ENCODE measurements at regions of chr7 and their contacts with region 1.

Region 1: DNA sequence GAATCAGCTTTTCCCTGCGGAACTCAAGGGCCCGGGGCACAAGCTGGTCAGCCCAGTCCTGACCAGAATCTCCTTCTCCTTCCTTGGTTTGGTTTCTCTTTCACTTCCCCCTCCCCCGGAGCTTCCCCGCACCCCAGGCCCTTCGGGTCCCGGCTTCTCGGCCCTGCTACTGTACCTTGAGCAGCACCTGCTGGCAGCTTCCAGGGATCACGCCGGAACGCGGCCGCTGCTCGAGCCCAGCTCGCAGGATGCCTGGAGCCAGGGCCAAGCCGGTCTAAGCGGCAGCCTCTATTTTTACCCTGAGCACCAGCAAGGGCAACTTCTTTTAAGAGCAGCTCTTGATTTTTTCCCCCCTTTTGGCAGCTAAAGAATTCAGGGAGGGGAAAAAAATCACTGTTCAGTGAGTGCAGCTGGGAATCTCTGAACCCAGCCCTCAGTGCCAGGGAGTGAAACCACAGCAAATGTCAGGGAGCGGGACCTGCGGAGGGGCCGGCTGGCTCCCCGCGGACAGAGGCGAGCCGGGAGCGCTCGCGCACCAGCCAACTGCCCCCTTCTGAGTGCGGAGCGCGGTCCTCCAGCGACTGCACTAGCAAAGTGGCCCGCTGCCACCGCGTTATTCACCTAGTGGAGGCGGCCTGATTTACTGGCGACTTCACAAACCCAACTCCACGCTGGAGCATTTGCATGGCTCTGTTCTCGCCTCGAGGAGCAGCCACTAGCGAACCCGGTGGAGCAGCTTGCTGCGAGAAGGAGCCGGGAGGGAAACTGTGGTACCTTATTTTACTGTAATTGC is 2.4 kb upstream of the INHBA start:
- DNase-seq: peak; percentile 50
- ATAC-seq: peak; percentile 98
- H3K4me3 ChIP-seq: peak overlapping the region; percentile 54; the same call in 1 of the 2 replicates
- H3K27ac ChIP-seq: no peak overlapping the region
- H3K4me1 ChIP-seq: peaks cover 11% of the 10 kb centered on the region
- H3K27me3 ChIP-seq: no peaks in the 10 kb centered on the region
- CTCF ChIP-seq: peak; percentile 68 to 88 (median 82)
- EP300 ChIP-seq: peak in 1 of 2 experiments; percentile 11; a peak in 1 of 4 replicates
- POLR2A ChIP-seq: no peak
- RAD21 ChIP-seq: peak; percentile 95

Region 2: GRCh38 chr7:39880556-39880955 is 1824.7 kb before region 1 on chr7:
- CTCF ChIA-PET with region 1: no interaction called
- POLR2A ChIA-PET with region 1: no interaction called
- RAD21 ChIA-PET with region 1: no interaction called
- SMC1A ChIA-PET with region 1: no interaction called
- in situ Hi-C with region 1: loop called (anchors 25 kb)
- intact Hi-C with region 1: no loop called
- DNase-seq: no peak
- ATAC-seq: no peak
- H3K4me3 ChIP-seq: no peak overlapping the region
- H3K27ac ChIP-seq: no peak overlapping the region
- H3K4me1 ChIP-seq: no peaks in the 10 kb centered on the region
- H3K27me3 ChIP-seq: no peaks in the 10 kb centered on the region
- CTCF ChIP-seq: no peak
- EP300 ChIP-seq: no peak
- POLR2A ChIP-seq: no peak
- RAD21 ChIP-seq: no peak

Region 3: DNA sequence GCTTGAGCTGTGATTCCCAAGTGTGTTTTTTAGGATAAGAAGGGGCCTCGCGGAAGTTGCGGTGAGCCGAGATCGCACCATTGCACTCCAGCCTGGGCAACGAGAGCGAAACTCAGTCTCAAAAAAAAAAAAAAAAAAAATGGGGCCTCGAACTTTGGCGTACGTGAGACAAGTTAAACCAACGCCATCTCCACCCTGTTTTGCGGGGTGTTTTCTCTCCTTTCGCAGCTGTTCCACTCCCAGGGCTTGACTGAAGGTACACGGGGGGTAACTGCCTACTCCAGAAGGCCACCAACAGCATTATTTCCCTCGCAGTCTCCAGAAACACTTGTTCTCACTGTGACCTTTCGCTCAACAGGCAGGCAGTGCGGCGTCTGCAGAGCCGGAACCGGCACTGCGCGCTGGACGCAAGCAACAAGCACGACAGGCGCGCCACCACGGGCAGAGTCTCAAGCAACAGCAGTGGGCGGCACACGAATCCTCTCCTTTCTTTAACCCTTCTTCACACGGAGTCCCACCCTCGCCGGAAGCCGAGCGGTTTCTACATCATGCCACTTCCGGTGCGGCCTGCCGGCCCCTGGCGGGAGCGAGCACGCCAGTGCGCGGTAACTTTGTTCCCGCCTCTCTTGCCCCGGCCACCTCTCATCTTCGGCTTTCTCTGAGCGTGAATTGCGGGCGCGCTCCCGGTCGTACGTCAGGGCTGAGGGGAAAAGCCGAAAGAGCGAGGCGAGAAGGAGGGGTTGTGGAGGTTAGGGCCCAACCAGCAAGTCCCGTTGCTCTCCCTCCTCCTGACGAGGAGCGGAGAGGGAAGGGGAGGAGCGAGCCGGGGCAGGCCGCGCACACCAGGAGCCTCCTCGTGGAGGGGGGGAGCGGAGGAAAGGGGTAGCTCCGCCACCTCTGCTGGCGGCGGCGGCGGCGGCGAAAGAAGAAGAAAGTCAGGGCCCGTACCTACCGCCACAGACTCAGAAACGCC is 1756.1 kb before region 1 on chr7:
- CTCF ChIA-PET with region 1: interaction called, 3 read pairs
- POLR2A ChIA-PET with region 1: no interaction called
- RAD21 ChIA-PET with region 1: no interaction called
- SMC1A ChIA-PET with region 1: no interaction called
- in situ Hi-C with region 1: no loop called
- intact Hi-C with region 1: loop called (anchors 5 kb)
- DNase-seq: peak; percentile 98
- ATAC-seq: peak; percentile 80
- H3K4me3 ChIP-seq: peak overlapping the region; percentile 93
- H3K27ac ChIP-seq: peak overlapping the region; percentile 98
- H3K4me1 ChIP-seq: peaks cover 9% of the 10 kb centered on the region; the same call in 1 of the 2 replicates
- H3K27me3 ChIP-seq: no peaks in the 10 kb centered on the region
- CTCF ChIP-seq: no peak
- EP300 ChIP-seq: peak in 1 of 2 experiments; percentile 7; a peak in 1 of 4 replicates
- POLR2A ChIP-seq: peak; percentile 98
- RAD21 ChIP-seq: no peak

Region 4: DNA sequence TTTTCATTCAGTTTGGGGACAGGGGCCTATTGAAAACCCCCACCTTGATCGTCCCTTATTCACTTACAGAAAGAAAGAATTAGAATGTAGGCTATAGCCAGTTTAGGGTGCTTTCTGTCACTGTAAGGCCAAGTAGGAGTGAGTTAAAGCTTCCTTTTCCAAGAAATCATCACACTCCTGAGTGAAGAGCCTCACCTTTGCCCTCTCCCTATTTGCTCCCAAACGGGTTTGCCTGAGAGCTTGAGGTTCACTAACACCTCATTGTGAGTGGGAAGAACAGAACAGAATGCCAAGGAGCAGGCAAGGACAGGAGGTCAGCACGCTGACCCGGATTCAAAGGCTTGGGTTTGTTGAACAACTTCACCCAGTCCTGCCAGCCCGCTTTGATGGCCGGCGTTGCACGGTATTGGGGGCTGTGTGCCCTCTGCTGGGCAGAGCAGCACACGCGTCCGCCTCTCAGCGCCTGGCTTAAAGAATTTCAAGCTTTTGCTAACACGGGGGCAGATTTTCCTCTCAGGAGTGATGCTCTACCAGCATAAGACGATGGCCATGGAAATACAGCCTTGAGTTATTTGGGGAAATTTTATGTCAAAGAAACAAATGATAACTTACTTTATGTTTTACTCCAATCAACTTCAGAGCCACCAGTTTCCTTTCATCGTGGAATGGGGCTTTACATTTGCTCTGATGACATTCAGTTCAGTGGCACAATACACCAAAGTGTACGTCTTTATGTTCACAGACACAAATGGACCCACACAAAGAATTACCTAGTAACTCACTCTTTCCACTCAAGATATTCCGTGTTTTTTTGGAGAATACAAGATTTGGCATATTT is 1100.5 kb before region 1 on chr7:
- CTCF ChIA-PET with region 1: interaction called, 7 read pairs
- POLR2A ChIA-PET with region 1: no interaction called
- RAD21 ChIA-PET with region 1: interaction called, 4 read pairs
- SMC1A ChIA-PET with region 1: no interaction called
- in situ Hi-C with region 1: no loop called
- intact Hi-C with region 1: loop called (anchors 1 kb)
- DNase-seq: no peak
- ATAC-seq: peak; percentile 99
- H3K4me3 ChIP-seq: no peak overlapping the region
- H3K27ac ChIP-seq: no peak overlapping the region
- H3K4me1 ChIP-seq: no peaks in the 10 kb centered on the region
- H3K27me3 ChIP-seq: no peaks in the 10 kb centered on the region
- CTCF ChIP-seq: peak; percentile 62 to 77 (median 74)
- EP300 ChIP-seq: no peak
- POLR2A ChIP-seq: no peak
- RAD21 ChIP-seq: peak; percentile 63

Region 5: GRCh38 chr7:41003031-41003925 is 702.0 kb before region 1 on chr7:
- CTCF ChIA-PET with region 1: interaction called, 36 read pairs
- POLR2A ChIA-PET with region 1: interaction called, 3 read pairs
- RAD21 ChIA-PET with region 1: interaction called, 21 read pairs
- SMC1A ChIA-PET with region 1: interaction called, 23 read pairs
- in situ Hi-C with region 1: no loop called
- intact Hi-C with region 1: no loop called
- DNase-seq: peak; percentile 3
- ATAC-seq: peak; percentile 67
- H3K4me3 ChIP-seq: no peak overlapping the region
- H3K27ac ChIP-seq: no peak overlapping the region
- H3K4me1 ChIP-seq: no peaks in the 10 kb centered on the region
- H3K27me3 ChIP-seq: no peaks in the 10 kb centered on the region; a peak in 1 of 4 replicates
- CTCF ChIP-seq: peak; percentile 69 to 76 (median 71); a peak in 5 of 6 replicates
- EP300 ChIP-seq: no peak
- POLR2A ChIP-seq: no peak
- RAD21 ChIP-seq: peak; percentile 79

Region 6: GRCh38 chr7:41491883-41492471 is 213.3 kb before region 1 on chr7:
- CTCF ChIA-PET with region 1: no interaction called
- POLR2A ChIA-PET with region 1: no interaction called
- RAD21 ChIA-PET with region 1: no interaction called
- SMC1A ChIA-PET with region 1: no interaction called
- in situ Hi-C with region 1: no loop called
- intact Hi-C with region 1: no loop called
- DNase-seq: no peak
- ATAC-seq: no peak
- H3K4me3 ChIP-seq: no peak overlapping the region
- H3K27ac ChIP-seq: no peak overlapping the region
- H3K4me1 ChIP-seq: no peaks in the 10 kb centered on the region
- H3K27me3 ChIP-seq: no peaks in the 10 kb centered on the region
- CTCF ChIP-seq: no peak
- EP300 ChIP-seq: no peak
- POLR2A ChIP-seq: no peak
- RAD21 ChIP-seq: no peak

Region 7: GRCh38 chr7:41573018-41573417 is 132.3 kb before region 1 on chr7:
- CTCF ChIA-PET with region 1: no interaction called
- POLR2A ChIA-PET with region 1: no interaction called
- RAD21 ChIA-PET with region 1: no interaction called
- SMC1A ChIA-PET with region 1: no interaction called
- in situ Hi-C with region 1: no loop called
- intact Hi-C with region 1: no loop called
- DNase-seq: no peak
- ATAC-seq: no peak
- H3K4me3 ChIP-seq: no peak overlapping the region
- H3K27ac ChIP-seq: no peak overlapping the region
- H3K4me1 ChIP-seq: no peaks in the 10 kb centered on the region
- H3K27me3 ChIP-seq: no peaks in the 10 kb centered on the region
- CTCF ChIP-seq: no peak
- EP300 ChIP-seq: no peak
- POLR2A ChIP-seq: no peak
- RAD21 ChIP-seq: no peak

Region 8: DNA sequence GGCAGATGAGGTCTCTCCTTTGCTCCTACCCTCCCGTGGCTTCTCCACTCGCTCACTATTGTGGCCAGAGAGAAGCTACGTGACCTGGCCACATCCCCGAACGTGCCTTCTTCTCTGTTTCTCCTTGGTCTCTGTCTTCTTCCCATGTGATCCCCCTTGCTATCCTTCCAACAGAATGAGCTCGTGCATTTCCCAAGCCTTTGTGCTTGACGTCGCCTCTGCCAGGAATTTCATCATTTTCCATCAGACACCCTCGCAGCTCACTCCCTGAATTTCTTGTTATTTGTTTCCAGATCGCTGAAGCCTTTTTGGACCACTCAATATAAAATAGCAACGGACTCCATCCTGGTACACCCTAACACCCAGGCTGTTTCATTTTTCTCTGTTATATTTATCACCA is 11.4 kb after region 1 on chr7:
- CTCF ChIA-PET with region 1: interaction called, 17 read pairs
- POLR2A ChIA-PET with region 1: interaction called, 3 read pairs
- RAD21 ChIA-PET with region 1: interaction called, 8 read pairs
- SMC1A ChIA-PET with region 1: interaction called, 13 read pairs
- in situ Hi-C with region 1: no loop called
- intact Hi-C with region 1: no loop called
- DNase-seq: no peak
- ATAC-seq: no peak
- H3K4me3 ChIP-seq: no peak overlapping the region
- H3K27ac ChIP-seq: no peak overlapping the region
- H3K4me1 ChIP-seq: no peaks in the 10 kb centered on the region
- H3K27me3 ChIP-seq: no peaks in the 10 kb centered on the region; a peak in 1 of 4 replicates
- CTCF ChIP-seq: no peak
- EP300 ChIP-seq: no peak
- POLR2A ChIP-seq: no peak
- RAD21 ChIP-seq: no peak

Measured in GM12878 (cell line).